Body of pancreas (tissue), 4 donors: ENCODE measurements at regions of chr9 and their contacts with region 1.

Region 1: GRCh38 chr9:8649160-8649559 is 849.6 kb upstream of the DMAC1 start:
- DNase-seq: no peak
- ATAC-seq: no peak
- H3K4me3 ChIP-seq: no peak overlapping the region
- H3K27ac ChIP-seq: no peak overlapping the region
- H3K4me1 ChIP-seq: no peaks in the 10 kb centered on the region
- H3K27me3 ChIP-seq: no peaks in the 10 kb centered on the region
- CTCF ChIP-seq: no peak
- POLR2A ChIP-seq: no peak

Region 2: GRCh38 chr9:8579661-8580060 is 69.5 kb before region 1 on chr9:
- intact Hi-C with region 1: loop called (anchors 10 kb)
- DNase-seq: no peak
- ATAC-seq: peak; percentile 84
- H3K4me3 ChIP-seq: no peak overlapping the region
- H3K27ac ChIP-seq: peak overlapping the region in 2 of 4 donors; percentile 5 to 53
- H3K4me1 ChIP-seq: no peaks in the 10 kb centered on the region
- H3K27me3 ChIP-seq: no peaks in the 10 kb centered on the region
- CTCF ChIP-seq: no peak
- POLR2A ChIP-seq: no peak